ENCODE measurements at regions of chr1 and their contacts with region 1.

Region 1: GRCh38 chr1:23184212-23184934 is 15.7 kb upstream of the LUZP1 start:
- DNase-seq: peak; percentile 46
- ATAC-seq: peak; percentile 44
- H3K4me3 Mint-ChIP-seq: peak overlapping the region; percentile 49
- H3K27ac Mint-ChIP-seq: no peak overlapping the region
- H3K4me1 Mint-ChIP-seq: peaks cover 4% of the 10 kb centered on the region
- H3K27me3 Mint-ChIP-seq: no peaks in the 10 kb centered on the region

Region 2: GRCh38 chr1:22794647-22795365 is 389.6 kb before region 1 on chr1:
- CTCF ChIA-PET with region 1: no interaction called
- POLR2A ChIA-PET with region 1: no interaction called
- intact Hi-C with region 1: no loop called
- DNase-seq: no peak
- ATAC-seq: no peak
- H3K4me3 Mint-ChIP-seq: no peak overlapping the region
- H3K27ac Mint-ChIP-seq: no peak overlapping the region
- H3K4me1 Mint-ChIP-seq: no peaks in the 10 kb centered on the region
- H3K27me3 Mint-ChIP-seq: no peaks in the 10 kb centered on the region

Region 3: DNA sequence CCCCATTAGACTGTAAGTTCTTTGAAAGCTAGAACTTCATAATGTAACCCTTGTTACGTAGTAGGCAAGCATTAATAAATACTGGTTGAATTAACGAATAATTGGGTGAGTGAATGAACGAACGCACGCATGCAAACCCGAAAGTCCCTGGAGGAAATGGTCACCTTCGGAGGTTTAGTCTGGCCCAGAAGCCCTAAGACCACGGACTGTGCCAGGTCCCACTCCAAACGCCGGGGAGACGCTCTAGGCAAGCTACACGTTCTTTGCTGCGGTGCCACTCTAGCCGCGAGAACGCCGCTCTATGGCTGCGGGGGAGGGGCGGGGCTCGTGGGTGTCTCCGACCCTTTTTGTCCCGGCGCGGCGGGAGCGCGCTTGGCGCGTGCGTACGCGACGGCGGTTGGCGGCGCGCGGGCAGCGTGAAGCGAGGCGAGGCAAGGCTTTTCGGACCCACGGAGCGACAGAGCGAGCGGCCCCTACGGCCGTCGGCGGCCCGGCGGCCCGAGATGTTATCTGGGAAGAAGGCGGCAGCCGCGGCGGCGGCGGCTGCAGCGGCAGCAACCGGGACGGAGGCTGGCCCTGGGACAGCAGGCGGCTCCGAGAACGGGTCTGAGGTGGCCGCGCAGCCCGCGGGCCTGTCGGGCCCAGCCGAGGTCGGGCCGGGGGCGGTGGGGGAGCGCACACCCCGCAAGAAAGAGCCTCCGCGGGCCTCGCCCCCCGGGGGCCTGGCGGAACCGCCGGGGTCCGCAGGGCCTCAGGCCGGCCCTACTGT is 165.1 kb before region 1 on chr1 and contains the start of gene KDM1A:
- CTCF ChIA-PET with region 1: interaction called, 10 read pairs
- POLR2A ChIA-PET with region 1: no interaction called
- intact Hi-C with region 1: no loop called
- DNase-seq: peak; percentile 96
- ATAC-seq: peak; percentile 97
- H3K4me3 Mint-ChIP-seq: peak within 1 kb of the TSS; percentile 98
- H3K27ac Mint-ChIP-seq: peak within 1 kb of the TSS; percentile 90
- H3K4me1 Mint-ChIP-seq: peaks cover 43% of the 10 kb centered on the region
- H3K27me3 Mint-ChIP-seq: no peaks in the 10 kb centered on the region
- total RNA-seq, gene KDM1A: 66.5 to 73.2 TPM

Region 4: GRCh38 chr1:23081376-23081775 is 103.0 kb before region 1 on chr1:
- CTCF ChIA-PET with region 1: interaction called, 14 read pairs
- POLR2A ChIA-PET with region 1: no interaction called
- intact Hi-C with region 1: no loop called
- DNase-seq: no peak
- ATAC-seq: peak; percentile 36
- H3K4me3 Mint-ChIP-seq: no peak overlapping the region
- H3K27ac Mint-ChIP-seq: no peak overlapping the region
- H3K4me1 Mint-ChIP-seq: no peaks in the 10 kb centered on the region
- H3K27me3 Mint-ChIP-seq: no peaks in the 10 kb centered on the region

Region 5: GRCh38 chr1:23122023-23122748 is 62.2 kb before region 1 on chr1:
- CTCF ChIA-PET with region 1: interaction called, 24 read pairs
- POLR2A ChIA-PET with region 1: no interaction called
- intact Hi-C with region 1: no loop called
- DNase-seq: no peak
- ATAC-seq: no peak
- H3K4me3 Mint-ChIP-seq: no peak overlapping the region
- H3K27ac Mint-ChIP-seq: no peak overlapping the region
- H3K4me1 Mint-ChIP-seq: peaks cover 49% of the 10 kb centered on the region
- H3K27me3 Mint-ChIP-seq: no peaks in the 10 kb centered on the region

Region 6: DNA sequence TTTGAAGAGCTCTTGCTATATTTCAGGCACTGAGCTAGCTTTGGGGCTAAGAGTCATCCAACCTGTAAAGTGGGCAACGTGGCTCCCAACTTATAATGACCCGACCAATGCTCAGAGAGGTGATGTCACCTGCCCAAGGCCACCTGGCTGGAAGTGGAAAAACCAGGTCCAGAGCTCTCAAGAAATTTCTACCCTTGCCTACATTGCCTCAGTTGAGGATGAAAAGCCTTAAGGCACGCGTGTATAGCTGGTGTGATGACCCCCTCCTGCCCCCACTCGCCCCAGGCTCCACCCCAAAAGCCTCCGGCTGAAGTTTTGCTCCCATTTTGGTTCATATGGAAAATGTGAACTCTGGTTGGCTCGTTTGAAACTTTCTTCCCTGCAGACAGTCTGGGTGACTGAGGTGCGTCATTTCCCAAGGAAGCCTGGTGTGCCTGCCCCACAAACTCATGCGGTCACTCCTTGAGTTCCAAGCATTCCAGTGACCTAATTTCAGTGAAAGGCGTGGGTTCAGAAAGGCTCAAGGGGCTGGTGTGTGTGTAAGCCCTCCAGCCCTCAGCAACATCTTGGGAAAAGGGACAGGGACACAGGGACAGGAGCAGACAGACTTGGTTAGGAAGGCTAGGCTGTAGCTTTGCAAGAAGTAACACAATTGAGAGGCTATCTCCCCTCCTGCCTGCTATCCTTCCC is 12.4 kb after region 1 on chr1:
- CTCF ChIA-PET with region 1: interaction called, 37 read pairs
- POLR2A ChIA-PET with region 1: no interaction called
- intact Hi-C with region 1: no loop called
- DNase-seq: no peak
- ATAC-seq: no peak
- H3K4me3 Mint-ChIP-seq: no peak overlapping the region
- H3K27ac Mint-ChIP-seq: no peak overlapping the region
- H3K4me1 Mint-ChIP-seq: no peaks in the 10 kb centered on the region
- H3K27me3 Mint-ChIP-seq: peaks cover 3% of the 10 kb centered on the region